Head of caudate nucleus (tissue), 42 donors: ENCODE measurements at regions of chr7 and their contacts with region 1.

Region 1: GRCh38 chr7:107917763-107918651 is 27.0 kb downstream of the DLD start:
- DNase-seq: no peak

Region 2: GRCh38 chr7:107856806-107857540 is 61.0 kb before region 1 on chr7:
- intact Hi-C with region 1: no loop called
- DNase-seq: no peak

Region 3: DNA sequence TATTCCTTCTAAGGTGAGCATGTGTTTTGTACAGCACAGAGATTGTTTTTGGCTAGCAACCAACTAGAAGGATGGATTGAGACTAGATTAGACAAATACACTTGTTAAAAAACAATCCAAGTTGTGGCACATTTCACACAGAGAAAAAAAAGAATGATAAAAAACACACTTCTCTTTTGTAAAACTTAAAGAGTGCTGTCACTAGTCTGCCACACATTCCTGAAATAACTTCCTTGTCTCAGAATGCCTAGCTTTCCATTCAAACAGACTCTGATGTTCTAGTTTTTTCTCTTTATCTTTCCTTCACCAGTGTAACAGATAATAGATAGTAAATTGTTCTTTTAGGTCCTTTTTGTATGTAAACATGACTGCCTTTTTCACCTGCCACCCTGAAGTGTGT is 15.6 kb before region 1 on chr7:
- intact Hi-C with region 1: no loop called
- DNase-seq: no peak

Region 4: DNA sequence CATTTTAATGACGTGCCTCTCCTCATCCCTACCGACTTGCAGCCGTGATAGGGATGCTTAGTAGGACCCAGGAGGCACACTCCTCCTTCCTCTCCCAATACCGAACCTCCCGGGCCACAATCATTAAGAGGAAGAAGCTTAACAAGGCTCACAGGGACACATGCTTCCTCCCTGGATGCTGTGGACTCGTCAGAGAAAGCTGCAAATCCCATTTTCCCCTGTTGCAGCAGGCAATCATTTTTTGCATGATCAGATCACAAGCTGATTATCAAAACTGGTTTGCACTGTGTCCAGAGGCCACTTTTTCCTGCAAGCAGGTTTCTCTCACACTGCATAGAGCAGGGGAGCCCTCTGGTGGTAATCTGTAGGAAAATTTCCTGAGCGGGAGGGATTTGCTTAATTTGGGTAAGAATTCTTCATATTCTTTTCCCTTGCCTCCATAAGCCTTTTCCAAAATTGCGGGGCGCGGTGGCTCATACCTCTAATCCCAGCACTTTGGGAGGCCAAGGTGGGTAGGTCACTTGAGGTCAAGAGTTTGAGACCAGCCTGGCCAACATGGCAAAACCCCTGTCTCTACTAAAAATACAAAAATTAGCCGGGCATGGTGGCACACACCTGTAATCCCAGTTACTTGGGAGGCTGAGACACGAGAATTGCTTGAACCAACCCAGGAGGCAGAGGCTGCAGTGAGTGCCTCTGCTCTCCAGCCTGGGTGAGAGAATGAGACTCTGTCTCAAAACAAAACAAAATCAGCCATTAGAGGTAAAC is 228.2 kb after region 1 on chr7:
- intact Hi-C with region 1: loop called (anchors 10 kb)
- DNase-seq: peak; percentile 13 to 87 (median 68)